B cell (primary cell): ENCODE measurements at regions of chr3 and their contacts with region 1.

Region 1: GRCh38 chr3:191342411-191342810 is 12.1 kb upstream of the UTS2B start:
- DNase-seq: no peak
- ATAC-seq: no peak
- H3K4me3 ChIP-seq: no peak overlapping the region
- H3K4me3 Mint-ChIP-seq: peak overlapping the region; percentile 4
- H3K27ac ChIP-seq: peak overlapping the region in 1 of 2 donors; percentile 4
- H3K27ac Mint-ChIP-seq: peak overlapping the region; percentile 6
- H3K4me1 ChIP-seq: peaks cover 31 to 66% of the 10 kb centered on the region in 2 donors
- H3K4me1 Mint-ChIP-seq: peaks cover 88% of the 10 kb centered on the region
- H3K27me3 ChIP-seq: no peaks in the 10 kb centered on the region
- H3K27me3 Mint-ChIP-seq: no peaks in the 10 kb centered on the region
- CTCF ChIP-seq: no peak

Region 2: DNA sequence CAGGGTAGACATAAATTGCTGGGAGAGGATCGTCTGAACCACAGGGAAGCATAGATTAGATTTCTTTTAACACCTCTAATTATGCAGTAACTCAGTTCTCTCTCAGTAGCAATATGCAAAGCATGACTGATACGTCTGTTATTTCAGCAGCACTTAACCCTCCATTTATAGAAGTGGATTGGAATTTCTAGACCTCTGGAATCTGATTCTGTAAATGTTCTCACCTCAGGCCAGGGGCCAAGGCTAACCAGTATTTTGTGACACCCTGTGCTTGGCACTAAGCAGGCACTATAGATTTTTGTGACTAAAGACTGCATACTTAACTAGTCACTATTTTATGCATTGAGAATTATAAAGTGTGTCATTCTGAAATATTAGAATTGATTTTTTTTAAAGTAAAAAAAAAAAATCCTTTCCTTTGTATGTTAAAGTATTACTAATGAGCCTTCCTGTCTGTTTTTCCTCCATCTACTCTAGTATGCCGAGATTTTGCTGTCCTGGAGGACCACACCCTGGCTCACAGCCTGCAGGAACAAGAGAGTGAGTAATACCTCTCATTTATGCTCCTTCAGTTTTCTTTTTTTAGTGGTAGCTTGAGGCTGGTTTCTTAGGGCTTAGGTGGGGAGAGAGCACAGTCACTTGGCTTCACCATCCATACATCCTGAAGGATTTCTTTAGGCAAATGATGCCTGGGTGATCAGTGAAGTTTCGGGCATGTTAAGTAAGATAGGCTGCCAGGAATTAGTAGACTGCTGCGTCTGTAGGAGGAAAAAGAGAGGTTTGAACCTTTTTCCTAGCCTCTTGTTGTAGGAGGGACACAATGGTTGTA is 14.4 kb after region 1 on chr3:
- CTCF ChIA-PET with region 1: interaction called, 5 read pairs
- POLR2A ChIA-PET with region 1: no interaction called
- intact Hi-C with region 1: loop called (anchors 1 kb)
- DNase-seq: no peak
- ATAC-seq: no peak
- H3K4me3 ChIP-seq: no peak overlapping the region
- H3K4me3 Mint-ChIP-seq: peak overlapping the region; percentile 8
- H3K27ac ChIP-seq: peak overlapping the region in 1 of 2 donors; percentile 70
- H3K27ac Mint-ChIP-seq: peak overlapping the region; percentile 78
- H3K4me1 ChIP-seq: peaks cover 38 to 40% of the 10 kb centered on the region in 2 donors
- H3K4me1 Mint-ChIP-seq: peaks cover 58% of the 10 kb centered on the region
- H3K27me3 ChIP-seq: no peaks in the 10 kb centered on the region
- H3K27me3 Mint-ChIP-seq: no peaks in the 10 kb centered on the region
- CTCF ChIP-seq: no peak